Activated CD4-positive, alpha-beta T cell treated with anti-CD3 and anti-CD28 coated beads, Interleukin-2, amount 10 ng/mL, durations not matched to agents 24 days and 14 days (primary cell): ENCODE measurements at regions of chrX and their contacts with region 1.

Region 1: GRCh38 chrX:137194164-137194563 is 160.4 kb upstream of the GPR101 start:
- DNase-seq: peak; percentile 72
- H3K4me3 Mint-ChIP-seq: no peak overlapping the region
- H3K27ac Mint-ChIP-seq: no peak overlapping the region
- H3K4me1 Mint-ChIP-seq: no peaks in the 10 kb centered on the region
- H3K27me3 Mint-ChIP-seq: peaks cover 2% of the 10 kb centered on the region

Region 2: GRCh38 chrX:136954930-136955329 is 239.2 kb before region 1 on chrX:
- intact Hi-C with region 1: loop called (anchors 1 kb)
- DNase-seq: no peak
- H3K4me3 Mint-ChIP-seq: no peak overlapping the region
- H3K27ac Mint-ChIP-seq: no peak overlapping the region
- H3K4me1 Mint-ChIP-seq: peaks cover 3% of the 10 kb centered on the region
- H3K27me3 Mint-ChIP-seq: no peaks in the 10 kb centered on the region

Region 3: DNA sequence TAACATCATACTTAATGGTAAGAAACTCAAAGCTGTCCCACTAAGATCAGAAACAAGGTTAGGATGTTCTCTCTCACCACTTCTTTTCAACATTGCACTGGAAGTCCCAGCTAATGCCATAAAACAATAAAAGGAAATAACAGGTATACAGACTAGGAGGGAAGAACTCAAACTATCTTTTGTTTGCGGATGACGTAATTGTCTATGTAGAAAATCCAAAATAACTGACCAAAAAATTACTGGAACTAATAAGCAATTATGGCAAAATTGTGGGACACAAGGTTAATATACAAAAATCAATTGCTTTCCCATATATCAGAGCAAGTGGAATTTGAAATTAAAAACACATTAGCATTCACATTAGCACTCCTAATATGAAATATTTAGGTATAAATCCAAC is 56.7 kb before region 1 on chrX:
- intact Hi-C with region 1: no loop called
- DNase-seq: no peak
- H3K4me3 Mint-ChIP-seq: no peak overlapping the region
- H3K27ac Mint-ChIP-seq: no peak overlapping the region
- H3K4me1 Mint-ChIP-seq: no peaks in the 10 kb centered on the region
- H3K27me3 Mint-ChIP-seq: no peaks in the 10 kb centered on the region

Region 4: DNA sequence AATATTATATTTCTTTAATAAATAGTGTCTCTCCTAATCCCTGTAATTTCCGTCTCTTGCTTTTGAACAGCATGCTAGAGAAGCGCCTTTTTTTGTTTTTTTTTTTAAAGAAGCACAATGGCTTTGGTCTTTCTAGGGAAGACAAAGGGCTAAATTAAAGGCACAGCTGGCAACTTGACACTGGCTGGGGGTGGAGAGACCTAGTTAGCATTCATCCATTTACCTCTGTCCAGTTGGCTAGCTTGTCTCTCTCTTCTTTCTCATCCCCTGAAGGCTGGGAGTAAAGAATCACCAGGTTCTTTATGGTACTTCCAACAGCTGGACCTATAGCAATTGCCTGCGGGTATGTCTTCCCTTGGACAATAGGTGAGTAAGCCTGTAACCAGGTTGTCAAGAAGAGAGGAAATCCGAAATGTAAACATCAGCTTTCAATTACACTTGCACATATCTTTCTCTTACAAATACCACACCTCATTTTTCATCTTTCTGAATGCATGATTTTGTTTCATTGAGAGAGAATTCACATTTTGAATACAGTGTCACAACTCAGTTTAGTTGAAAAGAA is 18.0 kb after region 1 on chrX:
- intact Hi-C with region 1: no loop called
- DNase-seq: no peak
- H3K4me3 Mint-ChIP-seq: no peak overlapping the region
- H3K27ac Mint-ChIP-seq: no peak overlapping the region
- H3K4me1 Mint-ChIP-seq: no peaks in the 10 kb centered on the region
- H3K27me3 Mint-ChIP-seq: no peaks in the 10 kb centered on the region

Region 5: DNA sequence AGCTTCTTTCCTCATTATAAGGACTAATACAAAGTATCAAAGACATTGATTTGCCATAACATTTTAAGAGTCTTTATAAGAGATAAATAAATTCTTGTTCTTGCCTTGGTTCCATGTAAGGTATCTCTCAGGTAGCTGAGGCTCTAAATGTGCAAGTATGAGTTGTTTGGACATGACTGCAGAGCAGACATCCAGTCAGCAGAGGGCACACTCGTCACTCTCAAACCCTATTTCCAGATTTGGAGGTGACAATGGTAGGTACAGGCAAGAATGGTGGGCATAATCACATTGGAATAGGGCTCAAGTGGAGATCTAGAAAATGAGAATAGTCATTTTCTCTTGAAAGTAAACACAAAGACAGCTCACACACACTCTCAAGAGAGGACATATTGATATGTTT is 238.4 kb after region 1 on chrX:
- intact Hi-C with region 1: no loop called
- DNase-seq: no peak
- H3K4me3 Mint-ChIP-seq: no peak overlapping the region
- H3K27ac Mint-ChIP-seq: no peak overlapping the region
- H3K4me1 Mint-ChIP-seq: no peaks in the 10 kb centered on the region
- H3K27me3 Mint-ChIP-seq: peaks cover 27% of the 10 kb centered on the region